WTC11 (cell line): ENCODE measurements at regions of chr11 and their contacts with region 1.

Region 1: GRCh38 chr11:117143871-117144476 is at the start of gene PAFAH1B2:
- DNase-seq: peak; percentile 95
- ATAC-seq: peak; percentile 87
- H3K4me3 Mint-ChIP-seq: peak within 1 kb of the TSS; percentile 98
- H3K27ac Mint-ChIP-seq: peak within 1 kb of the TSS; percentile 96
- H3K4me1 Mint-ChIP-seq: peaks cover 33% of the 10 kb centered on the region
- H3K27me3 Mint-ChIP-seq: peaks cover 3% of the 10 kb centered on the region; the same call in 1 of the 2 replicates
- CTCF ChIP-seq: no peak
- total RNA-seq, gene PAFAH1B2: 132 to 138 TPM (median 133 TPM) in 3 replicates

Region 2: DNA sequence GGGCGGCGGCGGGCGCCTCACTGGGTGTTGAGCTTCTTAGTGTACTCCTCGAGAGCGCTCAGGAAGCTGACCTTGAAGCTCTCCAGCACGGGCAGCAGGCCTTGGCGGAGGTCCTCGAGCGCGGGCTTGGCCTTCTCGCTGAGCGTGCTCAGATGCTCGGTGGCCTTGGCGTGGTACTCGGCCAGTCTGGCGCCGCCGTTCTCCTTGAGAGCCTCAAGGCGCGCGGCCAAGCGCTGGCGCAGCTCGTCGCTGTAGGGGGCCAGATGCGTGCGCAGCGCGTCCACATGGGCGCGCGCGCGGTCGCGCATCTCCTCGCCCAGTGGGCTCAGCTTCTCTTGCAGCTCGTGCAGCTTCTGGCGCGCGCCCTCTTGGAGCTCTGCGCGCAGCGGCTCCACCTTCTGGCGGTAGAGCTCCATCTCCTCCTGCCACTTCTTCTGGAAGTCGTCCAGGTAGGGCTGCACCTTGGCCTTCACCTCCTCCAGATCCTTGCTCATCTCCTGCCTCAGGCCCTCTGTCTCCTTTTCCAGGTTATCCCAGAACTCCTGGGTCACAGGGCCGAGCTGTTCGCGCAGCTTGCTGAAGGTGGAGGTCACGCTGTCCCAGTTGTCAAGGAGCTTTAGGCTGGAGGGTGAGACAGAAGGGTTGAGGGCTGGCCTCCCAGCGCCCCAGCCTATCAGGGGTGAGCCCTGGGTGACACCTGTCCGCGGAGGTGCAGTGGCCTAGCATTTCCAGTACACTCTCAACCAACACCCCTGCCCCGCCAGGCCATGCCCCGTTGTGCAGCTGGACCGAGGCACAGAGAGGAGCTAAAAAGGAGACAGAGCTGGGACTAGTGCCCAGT is 308.0 kb before region 1 on chr11:
- CTCF ChIA-PET with region 1: interaction called, 16 read pairs
- POLR2A ChIA-PET with region 1: interaction called, 4 read pairs
- DNase-seq: peak; percentile 88
- ATAC-seq: peak; percentile 83
- H3K4me3 Mint-ChIP-seq: peak overlapping the region; percentile 59
- H3K27ac Mint-ChIP-seq: no peak overlapping the region
- H3K4me1 Mint-ChIP-seq: peaks cover 19% of the 10 kb centered on the region
- H3K27me3 Mint-ChIP-seq: peaks cover 11% of the 10 kb centered on the region
- CTCF ChIP-seq: peak; percentile 12; the same call in 1 of the 2 replicates

Region 3: DNA sequence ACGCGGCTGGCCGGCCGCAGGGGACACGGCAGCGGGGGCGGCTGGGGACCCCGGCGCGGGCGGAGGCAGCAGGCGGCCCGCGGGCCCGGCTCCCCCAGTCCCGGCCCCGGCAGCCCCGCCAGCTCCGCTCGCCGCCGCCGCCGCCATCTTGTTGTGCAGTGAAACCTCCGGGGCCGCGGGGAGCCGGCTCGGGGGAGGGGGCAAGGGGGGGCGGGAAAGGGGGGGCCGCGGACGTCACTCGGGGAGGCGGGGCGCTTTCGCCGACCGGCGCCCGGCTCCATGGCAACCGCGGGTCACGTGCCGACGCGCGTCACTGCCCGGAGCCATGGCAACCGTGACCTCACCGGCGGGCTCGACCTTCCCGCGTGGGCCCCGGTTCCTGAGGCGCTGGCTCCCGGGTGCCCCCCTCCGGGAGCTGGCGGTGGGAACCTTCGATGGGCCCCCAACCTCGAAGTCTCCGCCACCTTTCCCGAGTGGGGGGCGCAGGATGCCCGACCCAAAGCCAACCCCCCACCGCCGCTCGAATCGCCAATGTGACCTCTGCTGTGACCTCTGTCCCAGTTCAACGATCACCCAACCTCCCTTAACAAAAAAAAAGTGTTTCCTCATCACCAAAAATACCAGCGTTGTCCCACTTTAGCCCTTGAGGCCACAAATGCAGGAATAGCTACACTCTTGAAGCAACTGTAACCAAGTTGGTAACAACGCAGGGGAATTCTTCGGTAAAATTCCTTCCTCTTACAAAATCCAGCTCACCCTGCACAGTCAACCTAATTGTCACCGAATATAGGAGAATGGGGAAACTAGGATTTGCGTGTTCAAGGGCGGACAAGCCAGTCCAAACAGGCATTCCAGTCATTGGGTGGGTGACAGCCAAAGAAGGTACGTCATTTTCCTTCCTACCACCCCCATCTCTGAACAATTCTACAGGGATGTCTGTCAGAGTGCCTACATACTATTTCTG is 45.4 kb before region 1 on chr11 and contains the start of gene SIK3:
- CTCF ChIA-PET with region 1: interaction called, 11 read pairs
- POLR2A ChIA-PET with region 1: interaction called, 3 read pairs
- DNase-seq: peak; percentile 90
- ATAC-seq: peak; percentile 65
- H3K4me3 Mint-ChIP-seq: peak within 1 kb of the TSS; percentile 92
- H3K27ac Mint-ChIP-seq: peak within 1 kb of the TSS; percentile 95
- H3K4me1 Mint-ChIP-seq: peaks cover 40% of the 10 kb centered on the region
- H3K27me3 Mint-ChIP-seq: no peaks in the 10 kb centered on the region
- CTCF ChIP-seq: no peak
- total RNA-seq, gene SIK3: 26.4 to 34.4 TPM (median 29.6 TPM) in 3 replicates

Region 4: GRCh38 chr11:117127171-117127901 is 16.6 kb before region 1 on chr11:
- CTCF ChIA-PET with region 1: interaction called, 38 read pairs
- POLR2A ChIA-PET with region 1: no interaction called
- DNase-seq: no peak
- ATAC-seq: no peak
- H3K4me3 Mint-ChIP-seq: no peak overlapping the region
- H3K27ac Mint-ChIP-seq: no peak overlapping the region
- H3K4me1 Mint-ChIP-seq: no peaks in the 10 kb centered on the region
- H3K27me3 Mint-ChIP-seq: no peaks in the 10 kb centered on the region; the same call in 1 of the 2 replicates
- CTCF ChIP-seq: no peak

Region 5: DNA sequence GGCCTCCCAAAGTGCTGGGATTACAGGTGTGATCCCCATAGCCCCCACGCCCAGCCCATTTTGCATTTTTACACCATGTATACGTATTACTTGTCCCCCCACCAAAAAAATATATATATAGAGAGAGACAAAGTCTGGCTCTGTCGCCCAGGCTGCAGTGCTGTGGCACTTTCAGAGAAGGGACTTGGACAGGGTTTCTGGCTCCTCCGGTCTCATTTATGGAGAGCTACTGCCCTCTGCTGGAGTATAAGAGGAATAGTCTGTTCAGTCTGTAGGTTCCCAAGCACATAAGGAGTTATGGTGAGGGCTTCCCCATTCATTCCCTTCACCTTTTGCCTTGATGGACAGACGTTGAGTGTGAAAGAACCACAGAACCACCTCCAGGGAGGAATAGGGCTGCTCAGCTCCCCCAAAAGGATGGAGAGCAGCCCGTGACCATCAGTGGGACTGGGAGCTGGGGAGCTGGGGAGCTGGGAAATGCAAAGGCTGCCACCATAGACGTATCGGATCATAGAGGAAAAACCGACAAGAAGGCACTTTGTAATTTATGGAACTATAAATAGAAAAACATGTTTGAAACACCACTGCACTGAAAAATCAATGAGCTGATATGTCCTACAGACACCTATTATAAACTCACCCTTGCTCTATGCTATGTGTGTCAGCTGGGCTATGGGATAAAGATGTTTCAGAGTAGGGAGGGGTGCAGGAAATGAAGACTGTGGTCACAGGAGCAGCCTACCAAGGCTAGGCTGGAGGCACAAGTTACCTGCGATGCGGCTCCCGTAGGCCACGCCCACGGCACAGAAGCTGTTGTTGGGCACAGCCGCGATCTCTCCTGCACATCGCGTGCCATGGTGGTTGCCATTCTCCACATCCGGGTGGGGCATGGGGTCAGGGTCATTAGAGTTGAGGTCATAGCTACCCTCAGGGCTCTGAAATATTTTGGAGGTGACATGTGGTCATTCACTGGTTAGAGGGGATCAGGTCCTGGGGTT is 82.7 kb after region 1 on chr11:
- CTCF ChIA-PET with region 1: interaction called, 11 read pairs
- POLR2A ChIA-PET with region 1: no interaction called
- DNase-seq: no peak
- ATAC-seq: peak; percentile 92
- H3K4me3 Mint-ChIP-seq: no peak overlapping the region
- H3K27ac Mint-ChIP-seq: no peak overlapping the region; the same call in 1 of the 2 replicates
- H3K4me1 Mint-ChIP-seq: peaks cover 14% of the 10 kb centered on the region
- H3K27me3 Mint-ChIP-seq: no peaks in the 10 kb centered on the region
- CTCF ChIP-seq: peak; percentile 52

Region 6: DNA sequence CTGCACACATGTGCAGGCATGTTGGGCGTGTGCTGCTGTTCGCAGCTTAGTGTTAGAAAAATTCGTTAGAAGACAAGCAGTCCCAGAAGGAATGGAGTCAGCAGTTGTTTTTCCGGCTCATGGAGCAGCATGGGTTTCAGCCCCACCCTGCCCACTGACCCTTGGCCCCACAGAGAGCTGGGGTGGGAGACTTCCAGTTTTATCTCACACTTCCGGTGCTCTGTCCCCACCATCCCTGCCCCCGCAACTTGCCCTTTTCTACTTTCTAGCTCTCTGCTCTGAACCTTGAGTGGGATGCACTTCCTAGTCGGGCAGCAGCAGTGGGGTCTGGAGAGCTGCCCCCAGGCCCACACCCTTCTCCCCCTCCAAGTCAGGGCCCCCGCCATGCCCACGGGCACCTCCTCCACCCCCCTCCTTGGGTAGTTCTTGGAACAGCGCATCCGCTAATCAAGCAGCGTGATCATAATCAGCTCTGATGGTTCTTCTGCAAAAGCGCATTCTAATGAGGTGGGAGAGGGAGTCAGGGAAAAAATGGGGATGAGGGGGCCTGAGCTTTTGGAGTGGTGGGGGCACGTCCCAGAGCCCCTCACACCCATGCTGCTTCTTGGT is 368.1 kb after region 1 on chr11:
- CTCF ChIA-PET with region 1: no interaction called
- POLR2A ChIA-PET with region 1: no interaction called
- DNase-seq: no peak
- ATAC-seq: no peak
- H3K4me3 Mint-ChIP-seq: no peak overlapping the region
- H3K27ac Mint-ChIP-seq: peak overlapping the region; percentile 91
- H3K4me1 Mint-ChIP-seq: peaks cover 37% of the 10 kb centered on the region
- H3K27me3 Mint-ChIP-seq: no peaks in the 10 kb centered on the region
- CTCF ChIP-seq: no peak